ENCODE measurements at regions of chr18 and their contacts with region 1.

Region 1: DNA sequence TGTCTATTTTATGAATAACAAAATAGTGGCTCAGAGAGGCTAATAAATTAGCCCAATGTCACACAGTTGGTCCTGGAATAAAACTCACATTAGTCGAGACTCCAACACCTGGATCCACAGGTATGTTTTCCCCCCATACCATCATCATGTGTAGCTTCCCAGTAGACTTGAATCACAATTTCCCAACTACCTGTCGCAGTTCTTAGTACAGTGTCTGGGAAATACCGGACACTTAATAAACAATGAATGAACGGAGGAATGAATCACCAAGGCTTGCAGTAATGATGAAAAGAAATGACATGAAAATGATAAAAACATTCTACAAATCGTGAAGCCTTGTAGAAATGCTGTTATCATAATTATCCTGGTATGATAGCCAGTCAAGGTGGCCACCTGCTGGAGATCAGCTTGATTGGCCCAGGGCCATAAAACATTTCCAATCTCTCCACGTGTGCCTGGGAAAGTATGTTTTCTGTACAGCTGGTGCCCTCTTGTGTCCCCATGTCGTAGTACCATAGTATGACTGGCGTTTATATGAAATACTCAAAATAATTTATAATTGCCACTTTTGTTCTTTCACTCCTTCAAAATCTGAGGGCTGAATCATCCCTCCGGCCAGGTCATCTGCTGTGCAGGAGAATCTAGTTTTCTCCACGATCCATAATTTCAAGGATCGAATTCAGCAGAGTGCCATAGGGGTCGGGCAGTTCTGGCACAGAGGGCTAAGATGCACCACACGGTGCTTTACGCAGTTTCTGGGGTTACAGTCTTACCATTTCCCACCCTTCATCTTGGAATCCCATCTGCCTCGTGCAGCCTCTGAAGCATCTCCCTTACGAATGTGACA is 95.4 kb downstream of the LAMA1 start:
- DNase-seq: peak; percentile 66
- H3K4me3 ChIP-seq: no peak overlapping the region
- H3K27ac ChIP-seq: no peak overlapping the region
- H3K4me1 ChIP-seq: no peaks in the 10 kb centered on the region
- H3K27me3 ChIP-seq: no peaks in the 10 kb centered on the region
- CTCF ChIP-seq: peak; percentile 47 to 91 (median 66)
- EP300 ChIP-seq: no peak
- POLR2A ChIP-seq: no peak

Region 2: GRCh38 chr18:6543330-6543908 is 478.8 kb before region 1 on chr18:
- in situ Hi-C with region 1: loop called in 1 of 4 experiments (anchors 25 kb)
- intact Hi-C with region 1: no loop called
- DNase-seq: no peak
- H3K4me3 ChIP-seq: no peak overlapping the region
- H3K27ac ChIP-seq: no peak overlapping the region
- H3K4me1 ChIP-seq: no peaks in the 10 kb centered on the region
- H3K27me3 ChIP-seq: no peaks in the 10 kb centered on the region
- CTCF ChIP-seq: peak; percentile 33 to 50 (median 42)
- EP300 ChIP-seq: no peak
- POLR2A ChIP-seq: no peak

Region 3: GRCh38 chr18:6795307-6795706 is 226.9 kb before region 1 on chr18:
- in situ Hi-C with region 1: no loop called
- intact Hi-C with region 1: no loop called
- DNase-seq: no peak
- H3K4me3 ChIP-seq: no peak overlapping the region
- H3K27ac ChIP-seq: peak overlapping the region in 2 of 4 donors; percentile 1
- H3K4me1 ChIP-seq: no peaks in the 10 kb centered on the region
- H3K27me3 ChIP-seq: no peaks in the 10 kb centered on the region
- CTCF ChIP-seq: no peak
- EP300 ChIP-seq: no peak
- POLR2A ChIP-seq: no peak

Region 4: DNA sequence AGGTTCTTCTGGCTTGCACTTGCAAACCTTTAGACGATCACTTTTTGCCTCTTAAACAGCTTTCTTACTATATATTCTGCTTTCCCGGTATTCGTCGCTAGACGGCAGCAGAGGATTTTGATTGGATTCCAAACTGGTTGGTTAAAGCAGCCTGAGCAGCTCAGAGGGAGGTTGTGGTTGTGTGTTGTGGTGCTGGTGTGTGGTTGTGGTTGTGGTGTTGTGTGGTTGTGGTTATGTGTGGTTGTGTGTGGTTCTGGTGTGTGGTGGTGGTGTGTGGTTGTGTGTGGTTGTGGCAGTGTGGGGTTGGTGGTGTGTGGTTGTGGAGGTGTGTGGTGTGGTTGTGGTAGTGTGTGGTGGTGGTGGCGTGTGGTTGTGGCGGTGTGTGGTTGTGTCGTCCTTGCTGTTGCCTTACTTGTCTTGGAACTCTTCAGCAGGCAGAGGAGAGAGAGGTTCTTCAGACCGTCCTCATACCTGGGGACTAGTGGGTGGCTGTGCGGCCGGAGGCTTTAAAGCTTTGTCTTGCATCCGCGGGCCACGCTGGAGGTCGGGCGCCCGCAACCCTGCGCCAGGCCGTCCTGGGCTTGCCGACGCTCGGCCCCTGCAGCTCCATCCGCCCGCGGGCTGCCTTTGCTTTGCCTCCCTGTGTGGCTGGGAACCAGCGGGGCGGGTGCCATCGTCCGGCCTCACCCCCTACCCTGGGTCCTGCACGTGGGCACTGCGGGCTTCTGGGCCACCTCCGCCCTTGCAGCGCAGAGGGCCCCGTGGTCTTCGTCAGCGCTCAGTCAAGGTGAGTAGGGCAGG is 101.9 kb before region 1 on chr18:
- in situ Hi-C with region 1: loop called in 2 of 4 experiments (anchors 5 to 25 kb)
- intact Hi-C with region 1: no loop called
- DNase-seq: peak; percentile 73
- H3K4me3 ChIP-seq: no peak overlapping the region
- H3K27ac ChIP-seq: no peak overlapping the region
- H3K4me1 ChIP-seq: no peaks in the 10 kb centered on the region
- H3K27me3 ChIP-seq: no peaks in the 10 kb centered on the region
- CTCF ChIP-seq: peak; percentile 60 to 92 (median 69)
- EP300 ChIP-seq: no peak
- POLR2A ChIP-seq: no peak